HEK293T (cell line): ENCODE measurements at regions of chr14 and their contacts with region 1.

Region 1: GRCh38 chr14:50778721-50779483 is 52.1 kb downstream of the NIN start:
- DNase-seq: no peak

Region 2: DNA sequence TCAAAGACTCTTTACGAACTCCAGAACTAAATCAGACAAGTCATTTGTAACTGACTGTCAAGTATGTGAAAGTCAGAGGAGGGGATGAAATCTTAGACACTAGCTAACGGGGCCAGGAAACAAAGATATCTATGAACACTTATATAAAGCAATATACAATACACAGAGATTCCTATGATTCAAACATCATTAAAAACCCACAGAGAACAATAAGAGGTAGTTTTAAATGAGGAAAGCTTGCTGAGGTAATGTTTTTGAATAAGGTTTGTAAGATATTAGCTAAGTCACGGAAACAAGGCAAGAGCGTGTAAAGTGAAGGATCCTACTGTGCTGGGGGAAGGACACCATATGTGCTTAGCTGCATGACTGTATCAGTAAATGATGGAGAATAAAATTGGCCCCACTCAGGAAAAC is 147.5 kb before region 1 on chr14:
- CTCF ChIA-PET with region 1: no interaction called
- POLR2A ChIA-PET with region 1: no interaction called
- DNase-seq: no peak

Region 3: DNA sequence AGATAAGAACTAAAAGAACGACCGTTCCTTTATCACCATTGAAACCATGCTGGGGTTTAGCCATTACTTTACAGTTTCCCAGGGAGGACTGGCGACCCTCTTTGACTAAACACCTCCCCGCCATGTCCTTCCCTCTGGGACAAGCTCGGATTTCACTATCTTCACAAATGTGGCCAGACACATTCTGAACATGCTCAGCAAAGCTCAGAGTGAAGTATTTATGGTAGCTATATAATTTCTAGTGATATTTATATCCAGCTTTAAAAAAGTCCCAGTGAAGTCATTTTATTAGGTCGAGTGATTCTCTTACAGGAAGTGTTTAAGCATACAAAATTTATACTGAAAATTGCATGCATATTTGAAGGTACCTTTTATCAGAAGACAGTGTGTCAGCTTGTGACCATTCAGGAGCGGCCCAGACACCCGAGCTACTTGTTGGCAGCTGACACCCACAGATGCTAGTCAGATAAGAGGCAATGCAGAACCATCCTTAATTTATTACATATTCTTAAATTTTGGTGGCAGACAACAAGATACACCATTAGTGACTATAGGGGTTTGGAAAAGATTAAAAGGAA is 15.3 kb after region 1 on chr14:
- CTCF ChIA-PET with region 1: interaction called, 13 read pairs
- POLR2A ChIA-PET with region 1: interaction called, 4 read pairs
- DNase-seq: peak; percentile 16